Posterior vena cava (tissue), 2 donors: ENCODE measurements at regions of chr7 and their contacts with region 1.

Region 1: DNA sequence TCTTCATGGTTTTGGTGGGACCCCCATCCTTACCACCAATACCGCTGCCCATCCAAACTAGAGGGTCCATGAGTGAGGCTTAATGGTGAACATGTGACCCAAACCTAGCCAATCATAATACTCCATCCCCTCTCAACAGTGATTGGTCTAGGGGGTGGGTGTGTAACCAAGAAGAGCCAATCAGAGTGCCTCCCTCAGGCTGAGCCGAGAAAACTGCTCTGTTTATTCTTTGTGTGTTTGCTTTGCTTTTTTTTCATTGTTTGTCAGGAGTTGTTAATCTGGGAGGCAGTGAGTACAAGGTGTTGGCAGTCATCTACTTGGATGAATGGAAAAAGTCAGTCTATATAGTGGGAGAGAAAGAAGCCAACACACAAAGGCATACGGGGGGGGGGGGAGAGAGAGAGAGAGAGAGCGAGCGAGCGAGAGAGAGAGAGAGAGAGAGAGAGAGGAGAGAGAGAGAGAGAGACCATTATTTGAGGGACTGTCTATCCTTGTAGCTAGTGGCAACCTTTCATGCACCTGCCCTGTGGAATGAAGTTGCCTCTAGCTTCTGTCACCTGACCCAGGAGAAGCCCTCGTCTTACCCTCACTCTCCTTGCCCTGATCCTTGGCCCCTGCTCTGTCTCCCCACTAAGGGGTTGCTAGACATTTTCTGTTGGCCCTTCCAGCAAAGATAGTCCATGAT is 441.7 kb downstream of the TYW1 start:
- DNase-seq: no peak

Region 2: GRCh38 chr7:69122953-69123352 is 1684.6 kb after region 1 on chr7:
- intact Hi-C with region 1: loop called in 1 of 2 experiments (anchors 5 kb)
- DNase-seq: no peak